GM12878 (cell line): ENCODE measurements at regions of chr10 and their contacts with region 1.

Region 1: GRCh38 chr10:119028900-119029612 is 458 bp upstream of the NANOS1 start:
- DNase-seq: peak; percentile 35
- ATAC-seq: peak; percentile 68
- H3K4me3 ChIP-seq: peak overlapping the region; percentile 54
- H3K27ac ChIP-seq: no peak overlapping the region
- H3K4me1 ChIP-seq: peaks cover 13% of the 10 kb centered on the region
- H3K27me3 ChIP-seq: no peaks in the 10 kb centered on the region; a peak in 1 of 4 replicates
- CTCF ChIP-seq: peak; percentile 9 to 24 (median 10); a peak in 2 of 6 replicates
- EP300 ChIP-seq: no peak
- POLR2A ChIP-seq: no peak
- RAD21 ChIP-seq: no peak

Region 2: DNA sequence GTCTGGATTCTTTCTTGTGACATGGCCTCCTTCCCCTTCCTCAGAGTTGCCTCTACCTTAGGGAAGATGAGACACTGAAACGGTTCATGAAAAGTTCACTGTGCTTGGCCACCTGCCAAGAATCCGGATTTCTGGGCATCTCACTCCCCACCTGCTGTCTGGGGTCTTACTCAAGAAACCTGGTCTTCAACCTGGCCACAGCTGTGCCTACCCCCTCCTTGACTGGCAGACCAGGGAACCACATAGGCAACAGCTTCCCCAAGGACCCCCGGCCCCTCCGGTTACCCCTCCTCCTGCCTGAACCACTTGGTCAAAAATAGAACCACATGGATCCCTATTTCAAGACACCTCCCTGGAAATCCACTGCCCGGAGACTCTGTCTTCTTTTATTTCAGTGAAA is 58.3 kb before region 1 on chr10:
- CTCF ChIA-PET with region 1: interaction called, 3 read pairs
- POLR2A ChIA-PET with region 1: no interaction called
- RAD21 ChIA-PET with region 1: interaction called, 5 read pairs
- SMC1A ChIA-PET with region 1: interaction called, 6 read pairs
- in situ Hi-C with region 1: no loop called
- intact Hi-C with region 1: loop called (anchors 1 kb)
- DNase-seq: no peak
- ATAC-seq: no peak
- H3K4me3 ChIP-seq: no peak overlapping the region
- H3K27ac ChIP-seq: no peak overlapping the region
- H3K4me1 ChIP-seq: no peaks in the 10 kb centered on the region
- H3K27me3 ChIP-seq: peaks cover 0 to 5% of the 10 kb centered on the region in 2 experiments; a peak in 1 of 4 replicates
- CTCF ChIP-seq: no peak
- EP300 ChIP-seq: no peak
- POLR2A ChIP-seq: no peak
- RAD21 ChIP-seq: no peak

Region 3: DNA sequence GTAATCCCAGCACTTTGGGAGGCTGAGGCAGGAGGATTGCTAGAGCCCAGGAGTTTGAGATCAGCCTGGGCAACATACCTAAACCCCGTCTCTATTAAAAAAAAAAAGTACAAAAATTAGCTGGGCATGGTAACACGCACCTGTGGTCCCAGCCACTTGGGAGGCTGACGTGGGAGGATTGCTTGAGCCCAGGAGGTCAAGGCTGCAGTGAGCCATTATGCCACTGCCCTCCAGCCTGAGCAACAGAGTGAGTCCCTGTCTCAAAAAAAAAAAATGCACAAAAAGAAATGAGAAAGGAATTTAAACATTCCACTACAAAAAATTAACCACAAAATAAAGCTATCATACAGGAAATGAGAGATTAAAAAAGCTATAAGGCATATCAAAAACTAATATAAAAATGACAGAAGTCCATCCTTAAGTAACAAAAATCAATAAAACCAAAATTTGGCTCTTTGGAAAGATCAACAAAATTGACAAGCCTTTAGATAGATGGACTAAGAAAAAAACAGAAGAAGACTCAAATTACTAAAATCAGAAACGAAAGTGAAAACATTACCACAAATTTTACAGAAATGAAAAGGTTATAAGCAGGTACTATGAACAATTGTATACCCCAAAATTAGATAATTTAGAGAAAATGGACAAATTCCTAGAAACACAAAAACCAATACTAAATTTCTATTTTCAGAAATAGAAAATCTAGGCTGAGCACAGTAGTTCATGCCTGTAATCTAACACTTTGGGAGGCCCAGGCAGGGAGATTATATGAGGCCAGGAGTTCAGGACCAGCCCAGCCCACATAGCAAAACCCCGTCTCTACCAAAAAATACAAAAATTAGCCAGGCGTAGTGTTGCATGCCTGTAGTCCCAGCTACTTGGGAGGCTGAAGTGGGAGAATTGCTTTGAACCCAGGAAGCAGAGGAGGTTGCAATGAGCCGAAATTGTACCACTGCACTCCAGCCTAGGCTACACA is 42.0 kb before region 1 on chr10:
- CTCF ChIA-PET with region 1: no interaction called
- POLR2A ChIA-PET with region 1: no interaction called
- RAD21 ChIA-PET with region 1: no interaction called
- SMC1A ChIA-PET with region 1: no interaction called
- in situ Hi-C with region 1: no loop called
- intact Hi-C with region 1: loop called (anchors 5 kb)
- DNase-seq: peak; percentile 24
- ATAC-seq: peak; percentile 85
- H3K4me3 ChIP-seq: peak overlapping the region; percentile 45; the same call in 1 of the 2 replicates
- H3K27ac ChIP-seq: peak overlapping the region; percentile 38
- H3K4me1 ChIP-seq: peaks cover 18% of the 10 kb centered on the region
- H3K27me3 ChIP-seq: peaks cover 2% of the 10 kb centered on the region in 2 experiments; a peak in 1 of 4 replicates
- CTCF ChIP-seq: no peak
- EP300 ChIP-seq: peak in 1 of 2 experiments; percentile 47; a peak in 1 of 4 replicates
- POLR2A ChIP-seq: no peak
- RAD21 ChIP-seq: no peak

Region 4: DNA sequence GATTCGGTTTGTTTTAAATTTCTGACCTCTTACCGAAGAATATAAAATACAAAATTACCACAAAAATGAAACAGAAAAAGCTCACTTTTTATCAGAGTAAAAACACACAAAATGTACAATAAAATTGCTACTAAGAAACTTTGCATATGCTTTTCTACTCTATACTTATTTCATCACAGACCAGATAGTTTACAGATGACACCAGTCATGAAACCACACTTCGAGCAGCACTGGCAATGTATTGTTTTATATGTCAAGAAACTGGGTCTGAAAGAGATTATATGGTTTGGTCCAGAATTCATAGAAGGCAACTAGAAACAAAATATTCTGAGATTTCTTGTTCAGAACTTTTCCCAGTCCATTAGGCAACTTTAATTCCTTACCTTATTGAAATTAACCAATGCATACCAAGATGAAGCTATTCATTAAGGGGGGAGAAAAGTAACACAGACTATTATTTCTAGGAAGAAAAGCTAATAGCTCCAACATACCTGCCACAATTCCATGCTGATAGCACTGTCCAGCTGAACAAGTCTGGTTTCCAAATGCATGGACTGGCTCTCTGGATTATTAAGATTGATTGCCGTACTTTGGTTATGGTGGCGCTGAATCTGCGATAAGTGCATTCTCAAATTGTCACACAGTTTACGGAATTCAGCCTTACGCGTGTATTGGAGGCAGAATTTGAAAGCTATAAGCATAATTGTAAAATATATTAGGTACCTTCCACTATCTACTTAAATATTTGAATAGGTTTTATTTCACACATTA is 41.5 kb after region 1 on chr10:
- CTCF ChIA-PET with region 1: no interaction called
- POLR2A ChIA-PET with region 1: interaction called, 5 read pairs
- RAD21 ChIA-PET with region 1: no interaction called
- SMC1A ChIA-PET with region 1: interaction called, 4 read pairs
- in situ Hi-C with region 1: no loop called
- intact Hi-C with region 1: loop called (anchors 5 kb)
- DNase-seq: no peak
- ATAC-seq: no peak
- H3K4me3 ChIP-seq: no peak overlapping the region
- H3K27ac ChIP-seq: no peak overlapping the region
- H3K4me1 ChIP-seq: no peaks in the 10 kb centered on the region
- H3K27me3 ChIP-seq: no peaks in the 10 kb centered on the region
- CTCF ChIP-seq: no peak
- EP300 ChIP-seq: no peak
- POLR2A ChIP-seq: no peak
- RAD21 ChIP-seq: no peak

Region 5: DNA sequence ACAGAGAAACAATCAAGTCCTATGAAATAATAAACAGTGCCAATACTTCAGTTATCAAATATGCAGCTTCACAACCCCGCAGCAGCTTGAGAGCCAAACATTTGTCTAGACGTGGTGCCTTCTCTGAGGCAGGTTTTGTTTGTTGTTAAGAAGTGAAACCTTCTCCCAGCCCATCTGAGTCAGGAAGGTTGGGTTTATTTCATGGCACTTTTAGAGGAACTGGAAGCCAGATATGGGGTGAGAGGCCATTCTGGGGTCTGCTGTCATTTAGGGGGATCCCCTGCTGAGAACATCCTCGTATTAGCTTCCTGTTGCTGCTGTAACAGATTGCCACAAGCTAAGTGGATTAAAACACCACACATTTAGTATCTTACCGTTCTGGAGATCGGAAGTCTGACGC is 291.9 kb after region 1 on chr10:
- CTCF ChIA-PET with region 1: no interaction called
- POLR2A ChIA-PET with region 1: no interaction called
- RAD21 ChIA-PET with region 1: no interaction called
- SMC1A ChIA-PET with region 1: no interaction called
- in situ Hi-C with region 1: no loop called
- intact Hi-C with region 1: no loop called
- DNase-seq: no peak
- ATAC-seq: peak; percentile 16; the same call in 1 of the 3 replicates
- H3K4me3 ChIP-seq: no peak overlapping the region
- H3K27ac ChIP-seq: no peak overlapping the region
- H3K4me1 ChIP-seq: peaks cover 12% of the 10 kb centered on the region
- H3K27me3 ChIP-seq: no peaks in the 10 kb centered on the region
- CTCF ChIP-seq: no peak
- EP300 ChIP-seq: no peak
- POLR2A ChIP-seq: no peak
- RAD21 ChIP-seq: no peak